ENCODE measurements at regions of chrX and their contacts with region 1.

Region 1: GRCh38 chrX:134396174-134396573 is 63.8 kb upstream of the HPRT1 start:
- DNase-seq: no peak

Region 2: DNA sequence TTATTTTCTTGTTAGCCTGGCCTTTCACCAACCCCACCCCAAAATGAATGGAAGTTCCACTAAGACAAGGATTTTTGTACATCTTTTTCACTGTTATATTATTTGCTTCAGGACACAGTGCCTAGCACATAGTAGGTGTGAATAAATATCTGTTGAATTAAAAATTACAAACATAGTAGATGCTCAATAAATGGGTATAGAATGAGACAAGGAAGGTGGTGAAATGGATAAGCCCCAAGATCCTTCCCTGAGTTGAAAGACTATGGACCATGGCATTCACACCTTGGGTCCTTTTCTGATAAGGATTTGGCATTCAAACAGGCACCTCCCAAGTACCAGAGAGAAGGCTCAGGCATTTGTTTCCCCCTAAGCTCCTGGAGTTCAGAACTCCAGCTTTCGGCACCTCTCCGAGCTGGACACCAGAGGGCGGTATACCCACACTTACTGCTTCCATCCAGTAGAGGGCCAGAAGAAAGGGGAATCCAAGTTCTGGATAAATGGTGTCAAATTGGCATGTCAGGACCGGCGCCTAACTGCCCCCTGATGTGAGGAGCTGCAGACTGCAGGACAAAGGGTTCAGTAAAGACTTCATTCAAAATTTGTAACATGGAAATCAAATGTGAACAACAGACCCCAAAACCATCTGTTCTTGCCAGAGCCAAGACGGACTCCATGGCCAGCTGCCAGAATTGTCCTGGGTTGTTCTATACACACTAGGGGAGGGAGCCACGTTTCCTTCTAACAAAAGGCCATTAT is 603.8 kb before region 1 on chrX:
- intact Hi-C with region 1: loop called (anchors 10 kb)
- DNase-seq: peak; percentile 32 to 88 (median 72)

Region 3: GRCh38 chrX:133939655-133940302 is 456.4 kb before region 1 on chrX:
- intact Hi-C with region 1: no loop called
- DNase-seq: no peak

Region 4: GRCh38 chrX:134251241-134251640 is 144.9 kb before region 1 on chrX:
- intact Hi-C with region 1: loop called (anchors 10 kb)
- DNase-seq: peak in 19 of 42 donors; percentile 2 to 59 (median 24)

Measured in head of caudate nucleus (tissue), 42 donors.